Tibial artery (tissue), 4 donors: ENCODE measurements at regions of chr11 and their contacts with region 1.

Region 1: GRCh38 chr11:85694386-85694980 is 8.5 kb upstream of the CCDC89 start:
- DNase-seq: no peak
- H3K4me3 ChIP-seq: no peak overlapping the region
- H3K27ac ChIP-seq: peak overlapping the region in 1 of 2 donors; percentile 29
- H3K4me1 ChIP-seq: peaks cover 0 to 8% (median 1%) of the 10 kb centered on the region in 4 donors
- H3K27me3 ChIP-seq: no peaks in the 10 kb centered on the region
- CTCF ChIP-seq: peak; percentile 45 to 57

Region 2: GRCh38 chr11:85810871-85811611 is 116.6 kb after region 1 on chr11 and contains the start of gene SYTL2:
- intact Hi-C with region 1: loop called (anchors 5 kb)
- DNase-seq: peak; percentile 58 to 85
- H3K4me3 ChIP-seq: peak within 1 kb of the TSS; percentile 67 to 72
- H3K27ac ChIP-seq: peak within 1 kb of the TSS; percentile 74 to 79
- H3K4me1 ChIP-seq: peaks cover 0 to 34% (median 20%) of the 10 kb centered on the region in 4 donors
- H3K27me3 ChIP-seq: no peaks in the 10 kb centered on the region
- CTCF ChIP-seq: no peak